ENCODE measurements at regions of chr10 and their contacts with region 1.

Region 1: DNA sequence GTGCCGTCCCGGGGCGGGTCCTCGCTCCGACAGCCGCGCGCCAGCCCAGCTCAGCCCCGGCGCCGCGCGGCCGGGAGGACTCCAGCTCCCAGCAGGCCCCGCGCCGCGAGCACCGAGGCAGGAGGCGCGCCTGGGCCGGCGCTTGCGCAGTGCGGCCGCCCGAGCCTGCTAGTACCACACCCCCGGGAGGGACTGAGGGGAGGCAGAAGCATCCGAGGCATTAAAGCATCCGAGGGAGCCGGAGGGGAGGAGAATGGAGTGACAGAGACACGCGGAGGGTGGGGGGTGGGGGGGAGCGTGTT is at the start of gene GRK5:
- DNase-seq: peak; percentile 95 to 99 (median 97)
- ATAC-seq: peak; percentile 94
- H3K4me3 ChIP-seq: peak within 1 kb of the TSS; percentile 91 to 94
- H3K27ac ChIP-seq: peak within 1 kb of the TSS; percentile 94 to 97
- H3K4me1 ChIP-seq: peaks cover 17 to 47% of the 10 kb centered on the region in 2 donors
- H3K27me3 ChIP-seq: peaks cover 0 to 16% of the 10 kb centered on the region in 2 donors
- CTCF ChIP-seq: no peak
- polyA plus RNA-seq, gene GRK5: 47.9 to 60.8 (median 56.5) TPM

Region 2: GRCh38 chr10:119270762-119271366 is 63.5 kb after region 1 on chr10:
- intact Hi-C with region 1: no loop called
- DNase-seq: peak in 3 of 4 donors; percentile 48 to 92 (median 86)
- ATAC-seq: peak; percentile 91
- H3K4me3 ChIP-seq: no peak overlapping the region
- H3K27ac ChIP-seq: peak overlapping the region; percentile 79 to 90
- H3K4me1 ChIP-seq: peaks cover 25 to 76% of the 10 kb centered on the region in 2 donors
- H3K27me3 ChIP-seq: no peaks in the 10 kb centered on the region
- CTCF ChIP-seq: no peak

Region 3: DNA sequence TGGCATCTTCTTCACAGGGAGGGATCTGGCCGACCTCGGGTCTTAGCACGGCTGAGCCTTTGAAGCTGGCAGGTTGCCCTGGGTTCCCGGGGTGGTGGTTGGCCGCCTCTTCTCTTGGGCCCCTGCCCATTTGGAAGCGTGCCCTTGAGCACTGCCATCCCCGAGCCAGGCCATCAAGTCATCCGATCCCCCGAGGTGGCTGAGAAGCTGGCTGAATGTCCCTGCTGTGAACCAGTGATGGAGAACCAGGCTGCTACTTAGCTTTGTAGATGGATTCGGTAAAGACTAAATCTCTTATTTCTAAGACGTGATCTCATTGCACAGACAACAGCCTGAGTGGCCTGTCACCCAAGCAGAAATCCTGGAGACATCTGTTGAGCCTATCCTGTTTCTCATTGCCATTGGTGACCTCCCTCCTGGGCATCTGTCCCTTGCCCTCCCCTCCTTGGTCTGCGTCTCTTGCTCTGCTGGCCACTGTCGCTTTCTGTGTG is 74.3 kb after region 1 on chr10:
- intact Hi-C with region 1: loop called in 1 of 2 experiments (anchors 10 kb)
- DNase-seq: no peak
- ATAC-seq: peak; percentile 16
- H3K4me3 ChIP-seq: no peak overlapping the region
- H3K27ac ChIP-seq: no peak overlapping the region
- H3K4me1 ChIP-seq: peaks cover 13 to 59% of the 10 kb centered on the region in 2 donors
- H3K27me3 ChIP-seq: no peaks in the 10 kb centered on the region
- CTCF ChIP-seq: no peak

Region 4: DNA sequence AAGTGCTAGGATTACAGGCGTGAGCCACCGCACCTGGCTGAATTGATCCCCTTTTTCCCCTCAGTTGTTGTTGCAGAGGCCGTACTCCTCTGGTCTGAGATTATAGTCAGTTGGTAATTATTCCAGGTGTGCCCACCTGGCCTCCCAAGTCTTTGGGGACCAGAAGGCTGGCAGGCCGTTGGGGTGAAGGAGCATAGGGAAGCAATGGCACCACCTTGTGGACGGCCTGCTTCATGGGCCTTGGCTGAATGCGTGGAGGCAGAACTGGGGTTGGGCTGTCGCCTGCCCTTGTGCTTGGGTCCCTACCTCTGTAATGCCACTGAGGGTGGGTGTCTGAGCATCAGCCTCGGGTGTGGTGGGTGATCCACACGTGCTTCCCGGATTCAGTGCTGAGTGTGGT is 209.5 kb after region 1 on chr10:
- intact Hi-C with region 1: loop called in 1 of 2 experiments (anchors 10 kb)
- DNase-seq: peak in 3 of 4 donors; percentile 68 to 88 (median 69)
- ATAC-seq: peak; percentile 56
- H3K4me3 ChIP-seq: no peak overlapping the region
- H3K27ac ChIP-seq: no peak overlapping the region
- H3K4me1 ChIP-seq: peaks cover 16% of the 10 kb centered on the region in 2 donors
- H3K27me3 ChIP-seq: no peaks in the 10 kb centered on the region
- CTCF ChIP-seq: peak; percentile 66 to 81

Region 5: DNA sequence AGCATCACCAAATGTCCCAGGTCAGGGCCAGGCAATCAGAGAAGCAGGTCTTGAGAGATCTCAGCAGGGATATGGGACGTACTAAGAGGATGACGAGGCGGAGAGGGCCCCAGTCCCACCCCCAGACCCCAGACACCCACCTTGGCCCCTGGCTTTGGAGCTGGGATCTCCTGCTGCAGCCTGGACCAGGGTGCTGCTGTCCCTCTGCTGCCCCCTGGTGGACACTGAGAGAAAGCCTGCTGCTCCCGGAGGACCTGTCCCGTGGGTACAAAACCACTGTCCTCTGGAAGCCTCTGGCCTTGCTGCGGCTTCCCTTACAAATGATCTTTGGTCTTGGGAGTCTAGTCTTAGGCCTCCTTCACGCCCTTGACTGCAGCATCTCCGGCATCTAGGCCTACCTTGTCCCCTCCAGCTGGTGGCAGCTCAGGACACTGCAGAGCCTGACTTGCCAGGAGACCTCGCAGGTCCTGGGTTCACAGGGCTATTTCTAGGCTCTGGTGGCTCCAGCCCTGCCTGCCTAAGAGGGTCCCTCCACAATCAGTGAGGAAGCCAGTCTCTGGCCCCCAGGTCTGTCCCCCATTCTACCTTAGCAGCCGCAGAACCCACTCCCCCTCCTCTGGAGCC is 238.1 kb after region 1 on chr10:
- intact Hi-C with region 1: loop called in 1 of 2 experiments (anchors 10 kb)
- DNase-seq: peak; percentile 79 to 92 (median 88)
- ATAC-seq: peak; percentile 83
- H3K4me3 ChIP-seq: no peak overlapping the region
- H3K27ac ChIP-seq: no peak overlapping the region
- H3K4me1 ChIP-seq: peaks cover 5 to 8% of the 10 kb centered on the region in 2 donors
- H3K27me3 ChIP-seq: no peaks in the 10 kb centered on the region
- CTCF ChIP-seq: peak; percentile 97 to 98

Measured in left lung (tissue), 14 donors.